Endothelial cell of umbilical vein (primary cell): ENCODE measurements at regions of chr16 and their contacts with region 1.

Region 1: GRCh38 chr16:75110637-75111513 is 5.7 kb downstream of the LDHD start:
- DNase-seq: peak; percentile 85
- H3K4me3 ChIP-seq: no peak overlapping the region
- H3K27ac ChIP-seq: no peak overlapping the region
- H3K4me1 ChIP-seq: peaks cover 12% of the 10 kb centered on the region
- H3K27me3 ChIP-seq: no peaks in the 10 kb centered on the region
- CTCF ChIP-seq: peak; percentile 87 to 95
- POLR2A ChIP-seq: no peak

Region 2: DNA sequence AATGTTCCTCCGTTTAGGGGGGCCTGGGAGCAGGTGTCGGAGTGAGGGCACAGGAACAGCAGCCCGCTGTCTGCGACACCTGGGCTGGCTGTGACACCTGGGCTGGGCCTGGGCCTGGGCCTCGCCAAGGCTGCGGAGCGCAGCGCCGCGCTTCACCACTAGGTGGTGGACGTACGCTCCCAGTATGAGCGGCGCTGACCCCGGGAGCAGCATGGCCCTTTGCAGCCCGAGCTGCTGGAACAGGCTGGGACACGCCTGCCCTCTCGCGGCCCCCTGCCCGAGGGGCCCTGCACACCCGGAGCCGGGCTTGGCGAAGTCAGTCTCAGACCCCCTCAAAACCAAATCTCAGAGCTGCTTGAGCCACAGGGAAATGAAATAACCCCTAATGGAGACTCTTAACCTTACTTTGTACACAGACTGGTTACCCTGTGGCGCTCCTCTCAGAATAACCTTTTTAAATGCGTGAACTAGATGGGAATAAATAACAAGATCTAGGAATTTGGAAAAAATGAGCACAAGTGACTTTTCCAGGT is 297.7 kb before region 1 on chr16:
- CTCF ChIA-PET with region 1: interaction called, 6 read pairs
- POLR2A ChIA-PET with region 1: no interaction called
- dilution Hi-C with region 1: no loop called
- intact Hi-C with region 1: loop called (anchors 1 kb)
- DNase-seq: peak; percentile 61
- H3K4me3 ChIP-seq: no peak overlapping the region
- H3K27ac ChIP-seq: no peak overlapping the region
- H3K4me1 ChIP-seq: no peaks in the 10 kb centered on the region
- H3K27me3 ChIP-seq: peaks cover 0 to 8% of the 10 kb centered on the region in 2 experiments
- CTCF ChIP-seq: peak; percentile 97 to 98
- POLR2A ChIP-seq: no peak

Region 3: DNA sequence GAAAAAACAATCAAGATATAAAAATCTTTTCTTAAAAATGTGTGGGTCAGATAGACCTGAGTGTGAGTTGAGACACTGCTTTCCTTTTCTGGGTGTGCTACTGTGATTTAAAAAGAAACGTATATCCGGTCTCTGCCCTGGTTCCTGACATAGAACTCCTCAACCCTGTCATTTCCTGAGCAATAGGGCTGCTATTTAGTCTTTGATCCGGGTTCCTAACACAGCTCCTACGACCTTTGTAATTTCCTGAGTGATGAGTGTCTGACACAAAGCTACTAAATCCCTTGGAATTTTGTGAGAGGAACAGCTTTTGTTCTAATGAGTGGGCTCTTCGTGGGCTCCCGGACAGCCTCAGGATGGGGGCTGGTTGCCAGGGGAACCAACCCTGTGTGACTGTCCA is 242.4 kb before region 1 on chr16:
- CTCF ChIA-PET with region 1: interaction called, 22 read pairs
- POLR2A ChIA-PET with region 1: no interaction called
- dilution Hi-C with region 1: no loop called
- intact Hi-C with region 1: loop called (anchors 1 kb)
- DNase-seq: peak; percentile 75
- H3K4me3 ChIP-seq: peak overlapping the region in 1 of 3 experiments; percentile 35
- H3K27ac ChIP-seq: peak overlapping the region; percentile 89
- H3K4me1 ChIP-seq: peaks cover 17% of the 10 kb centered on the region
- H3K27me3 ChIP-seq: no peaks in the 10 kb centered on the region
- CTCF ChIP-seq: no peak
- POLR2A ChIP-seq: no peak

Region 4: DNA sequence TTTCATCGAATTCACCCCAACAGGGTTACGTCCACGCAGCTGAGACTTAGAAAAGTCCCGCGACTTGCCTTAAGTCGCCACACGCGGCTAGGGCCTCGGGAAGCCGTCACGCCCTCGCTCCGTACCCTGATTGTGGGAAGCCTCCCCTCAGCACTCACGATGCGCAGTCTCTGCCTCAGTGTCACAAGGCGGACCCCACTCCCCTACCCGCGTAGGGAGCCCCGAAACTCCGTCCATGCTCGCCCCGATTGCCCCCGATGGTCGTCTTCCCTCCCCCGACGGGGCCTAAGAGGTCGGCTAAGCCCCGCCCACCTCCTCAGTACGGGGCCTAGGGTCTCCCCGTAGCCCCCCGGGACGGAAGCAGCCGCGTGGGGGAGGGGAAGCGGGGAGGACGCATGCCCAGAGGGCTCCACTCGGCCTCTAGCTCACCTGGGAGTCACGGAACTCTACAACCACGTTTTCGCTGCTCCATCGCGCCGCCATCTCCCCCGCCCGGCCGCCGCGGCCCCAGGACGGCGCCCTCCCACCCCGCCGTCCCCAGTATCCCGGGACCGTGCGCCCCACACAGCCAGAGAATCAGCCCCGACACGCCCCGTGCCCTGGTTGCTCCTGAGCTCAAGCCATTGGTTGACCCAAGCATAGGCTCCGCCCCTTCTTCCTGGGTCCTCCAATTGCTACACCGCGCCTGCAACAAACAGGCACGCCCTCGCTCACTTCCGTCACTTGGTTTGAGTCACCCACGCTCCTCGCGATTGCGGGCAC is 126.2 kb before region 1 on chr16 and contains the start of gene WDR59:
- CTCF ChIA-PET with region 1: interaction called, 23 read pairs
- POLR2A ChIA-PET with region 1: interaction called, 4 read pairs
- dilution Hi-C with region 1: no loop called
- intact Hi-C with region 1: no loop called
- DNase-seq: peak; percentile 99
- H3K4me3 ChIP-seq: peak within 1 kb of the TSS; percentile 41 to 89 (median 73)
- H3K27ac ChIP-seq: peak within 1 kb of the TSS; percentile 42
- H3K4me1 ChIP-seq: no peaks in the 10 kb centered on the region
- H3K27me3 ChIP-seq: no peaks in the 10 kb centered on the region
- CTCF ChIP-seq: no peak
- POLR2A ChIP-seq: peak; percentile 84
- total RNA-seq, gene WDR59: 60.0 and 62.2 TPM in 2 replicates

Region 5: DNA sequence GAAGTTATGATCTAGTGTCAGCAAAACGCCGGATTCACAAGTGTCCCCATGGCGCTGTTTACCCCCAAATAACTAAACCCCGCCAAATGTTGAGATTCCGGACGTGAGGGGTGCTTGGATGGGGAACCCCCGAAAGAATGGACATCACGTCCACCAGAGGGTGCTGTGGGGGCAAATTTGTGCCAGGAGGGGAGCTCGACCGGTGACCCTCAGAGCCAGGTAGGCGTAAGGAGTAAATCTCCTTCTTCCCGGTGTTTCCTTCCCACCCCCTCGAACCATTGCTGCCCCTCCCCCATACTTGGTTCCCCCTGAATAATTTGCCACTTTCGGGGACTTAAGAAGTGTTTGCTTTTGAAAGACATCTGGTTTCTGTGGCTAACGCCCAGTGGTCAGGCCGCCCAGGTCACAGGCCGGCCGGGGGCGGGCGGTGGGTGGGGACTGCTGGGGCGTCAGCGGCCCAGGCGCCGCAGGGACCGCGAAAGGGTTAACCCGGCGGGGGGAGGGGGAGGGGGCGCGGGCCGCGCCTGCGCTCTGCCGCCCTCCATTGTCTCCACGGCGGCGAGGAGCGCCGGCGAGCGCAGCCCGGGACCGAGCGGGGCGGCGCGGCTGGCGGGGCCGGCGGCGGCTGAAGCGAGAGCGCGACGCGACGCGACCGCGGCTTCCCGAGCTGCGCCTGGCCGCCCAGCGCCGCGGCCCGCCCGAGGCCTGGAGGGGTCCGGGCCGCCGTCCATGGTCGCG is 112.2 kb before region 1 on chr16 and contains the start of gene ZNRF1:
- CTCF ChIA-PET with region 1: interaction called, 317 read pairs
- POLR2A ChIA-PET with region 1: interaction called, 3 read pairs
- dilution Hi-C with region 1: no loop called
- intact Hi-C with region 1: loop called (anchors 1 kb)
- DNase-seq: peak; percentile 83
- H3K4me3 ChIP-seq: peak within 1 kb of the TSS; percentile 61 to 82 (median 63)
- H3K27ac ChIP-seq: peak within 1 kb of the TSS; percentile 23
- H3K4me1 ChIP-seq: peaks cover 21% of the 10 kb centered on the region
- H3K27me3 ChIP-seq: no peaks in the 10 kb centered on the region
- CTCF ChIP-seq: peak; percentile 55 to 72
- POLR2A ChIP-seq: peak; percentile 75
- total RNA-seq, gene ZNRF1: 33.2 and 34.9 TPM in 2 replicates

Region 6: GRCh38 chr16:75074920-75075687 is 35.8 kb before region 1 on chr16:
- CTCF ChIA-PET with region 1: interaction called, 14 read pairs
- POLR2A ChIA-PET with region 1: no interaction called
- dilution Hi-C with region 1: no loop called
- intact Hi-C with region 1: loop called (anchors 2 kb)
- DNase-seq: peak; percentile 56
- H3K4me3 ChIP-seq: no peak overlapping the region
- H3K27ac ChIP-seq: peak overlapping the region; percentile 35
- H3K4me1 ChIP-seq: peaks cover 13% of the 10 kb centered on the region
- H3K27me3 ChIP-seq: no peaks in the 10 kb centered on the region
- CTCF ChIP-seq: no peak
- POLR2A ChIP-seq: no peak

Region 7: GRCh38 chr16:75099756-75100602 is 10.9 kb before region 1 on chr16:
- CTCF ChIA-PET with region 1: interaction called, 11 read pairs
- POLR2A ChIA-PET with region 1: no interaction called
- dilution Hi-C with region 1: no loop called
- intact Hi-C with region 1: no loop called
- DNase-seq: peak; percentile 39
- H3K4me3 ChIP-seq: no peak overlapping the region
- H3K27ac ChIP-seq: no peak overlapping the region
- H3K4me1 ChIP-seq: peaks cover 12% of the 10 kb centered on the region
- H3K27me3 ChIP-seq: no peaks in the 10 kb centered on the region
- CTCF ChIP-seq: no peak
- POLR2A ChIP-seq: no peak